ENCODE measurements at regions of chr1 and their contacts with region 1.

Region 1: DNA sequence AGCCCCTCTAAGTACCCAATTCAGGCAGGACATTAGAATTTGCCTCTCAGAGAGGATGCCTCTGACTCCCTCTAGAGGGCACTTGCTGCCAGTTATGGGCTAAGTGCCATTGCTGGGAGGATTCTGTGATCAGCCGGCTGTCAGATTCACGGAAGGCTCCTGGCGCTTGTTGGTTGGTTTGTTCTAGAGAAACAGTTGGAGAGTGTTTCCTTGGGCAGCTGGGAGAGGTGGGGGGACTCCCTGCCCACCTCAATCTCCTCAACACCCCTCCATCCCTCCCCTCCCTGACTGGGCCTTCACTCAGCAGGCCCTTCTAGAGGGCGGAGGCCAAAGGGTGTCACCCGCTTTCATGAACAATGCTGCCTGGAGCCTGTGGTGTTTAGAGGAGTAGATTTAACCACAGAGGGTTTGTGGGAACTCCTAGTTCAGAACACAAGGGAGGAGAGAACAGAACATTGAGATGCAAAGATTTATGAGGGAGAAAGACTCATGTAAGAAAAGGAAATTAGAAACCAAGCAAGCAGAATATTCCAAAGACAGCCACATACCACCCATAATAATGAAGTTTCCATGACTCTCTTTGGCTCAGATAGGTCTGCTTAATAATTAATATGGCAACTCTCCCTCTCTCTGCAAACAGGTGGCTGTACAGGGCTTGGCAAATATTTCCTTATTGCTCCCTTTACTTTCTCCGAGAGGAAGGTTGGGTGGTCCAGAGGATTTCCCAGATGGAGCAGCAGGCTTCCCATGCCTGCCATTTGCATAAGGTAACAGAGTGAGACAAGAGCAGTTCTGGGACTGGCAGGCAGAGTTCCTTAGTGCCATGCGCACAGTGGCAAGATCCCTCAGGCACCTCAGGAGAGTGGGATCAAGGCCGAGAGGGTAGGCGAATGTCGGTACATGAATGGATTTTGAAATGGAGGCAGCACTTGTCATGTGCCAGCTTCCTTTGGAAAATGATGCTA is 30.0 kb upstream of the ACP6 start:
- DNase-seq: no peak
- ATAC-seq: peak; percentile 77

Region 2: GRCh38 chr1:147640553-147641165 is 59.7 kb before region 1 on chr1:
- intact Hi-C with region 1: loop called (anchors 5 kb)
- DNase-seq: peak; percentile 77
- ATAC-seq: peak; percentile 91